ENCODE measurements at regions of chr2 and their contacts with region 1.

Region 1: DNA sequence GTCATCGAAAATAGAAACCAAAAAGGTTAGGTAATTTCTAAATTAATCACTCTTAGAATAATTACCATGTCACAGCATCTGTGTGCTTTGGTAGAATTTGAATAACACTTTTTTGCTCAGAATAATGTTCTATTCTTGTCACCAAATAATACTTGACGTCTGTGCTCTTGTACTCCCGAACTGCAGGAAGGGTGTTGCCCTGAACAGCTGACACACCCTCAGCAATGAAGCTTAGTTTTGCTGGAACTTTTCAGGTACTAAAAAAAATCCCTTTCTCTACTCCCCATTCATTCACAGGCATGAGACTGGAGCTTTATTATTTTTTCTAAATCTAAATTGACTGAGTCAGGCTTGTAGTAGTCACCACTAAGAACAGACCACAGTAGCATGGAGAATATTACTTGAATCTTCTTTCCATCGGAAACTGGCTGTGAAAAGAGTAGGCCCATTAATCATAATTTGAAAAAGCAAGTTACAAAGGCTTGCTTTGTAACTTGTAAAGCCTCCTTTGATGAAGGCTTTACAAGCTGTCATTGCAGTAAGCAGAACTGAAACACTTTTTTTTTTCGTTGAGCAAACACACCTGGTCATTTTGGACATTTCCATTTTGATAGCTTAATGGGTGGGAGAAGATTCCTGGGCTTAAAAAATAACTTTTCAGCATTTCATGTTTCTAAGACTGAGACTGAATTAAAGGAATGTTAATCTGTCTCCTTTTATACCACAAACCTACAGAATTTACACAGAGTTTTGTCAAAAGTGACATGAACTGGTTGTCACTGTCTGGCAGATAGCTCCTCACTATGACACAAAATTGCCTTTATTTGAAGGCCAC is 70.3 kb upstream of the PELI1 start:
- DNase-seq: peak in 1 of 2 experiments; percentile 69
- H3K4me3 ChIP-seq: no peak overlapping the region
- H3K4me3 Mint-ChIP-seq: peak overlapping the region; percentile 28
- H3K27ac Mint-ChIP-seq: peak overlapping the region; percentile 37
- H3K4me1 ChIP-seq: peaks cover 26% of the 10 kb centered on the region
- H3K4me1 Mint-ChIP-seq: peaks cover 21% of the 10 kb centered on the region
- H3K27me3 ChIP-seq: no peaks in the 10 kb centered on the region
- H3K27me3 Mint-ChIP-seq: no peaks in the 10 kb centered on the region
- CTCF ChIP-seq: no peak

Region 2: GRCh38 chr2:64114063-64114911 is 100.2 kb before region 1 on chr2:
- CTCF ChIA-PET with region 1: no interaction called
- POLR2A ChIA-PET with region 1: no interaction called
- intact Hi-C with region 1: no loop called
- DNase-seq: no peak
- H3K4me3 ChIP-seq: no peak overlapping the region
- H3K4me3 Mint-ChIP-seq: no peak overlapping the region
- H3K27ac Mint-ChIP-seq: peak overlapping the region; percentile 63
- H3K4me1 ChIP-seq: peaks cover 78% of the 10 kb centered on the region
- H3K4me1 Mint-ChIP-seq: peaks cover 45% of the 10 kb centered on the region
- H3K27me3 ChIP-seq: no peaks in the 10 kb centered on the region
- H3K27me3 Mint-ChIP-seq: no peaks in the 10 kb centered on the region
- CTCF ChIP-seq: no peak

Region 3: DNA sequence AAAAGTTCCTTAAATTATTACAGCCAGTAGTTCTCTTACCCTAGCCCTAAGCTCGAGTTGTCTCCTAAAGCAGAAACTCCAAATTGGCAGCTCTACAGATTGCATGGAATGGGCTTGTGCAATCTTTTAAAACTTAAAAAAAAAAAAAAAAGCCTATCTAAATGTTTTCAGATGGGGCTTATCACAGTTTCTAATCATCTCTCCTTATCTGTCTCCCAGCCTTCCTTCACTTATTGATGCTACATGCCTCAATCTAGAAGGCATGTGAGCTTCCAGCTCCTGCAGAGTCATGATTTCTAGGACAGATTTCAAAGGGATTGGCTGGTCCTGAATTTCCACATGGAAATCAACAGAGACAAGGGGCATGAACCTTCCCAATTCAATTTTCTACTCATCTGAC is 37.2 kb before region 1 on chr2:
- CTCF ChIA-PET with region 1: interaction called, 3 read pairs
- POLR2A ChIA-PET with region 1: interaction called, 3 read pairs
- intact Hi-C with region 1: loop called (anchors 1 kb)
- DNase-seq: peak; percentile 63 to 72
- H3K4me3 ChIP-seq: no peak overlapping the region
- H3K4me3 Mint-ChIP-seq: peak overlapping the region; percentile 12
- H3K27ac Mint-ChIP-seq: no peak overlapping the region
- H3K4me1 ChIP-seq: peaks cover 50% of the 10 kb centered on the region
- H3K4me1 Mint-ChIP-seq: peaks cover 60% of the 10 kb centered on the region
- H3K27me3 ChIP-seq: no peaks in the 10 kb centered on the region
- H3K27me3 Mint-ChIP-seq: no peaks in the 10 kb centered on the region
- CTCF ChIP-seq: no peak

Measured in Caco-2 (cell line).